ENCODE measurements at regions of chr14 and their contacts with region 1.

Region 1: GRCh38 chr14:74571901-74572725 is 39.9 kb downstream of the LTBP2 start:
- DNase-seq: no peak
- ATAC-seq: no peak
- H3K4me3 Mint-ChIP-seq: no peak overlapping the region
- H3K27ac Mint-ChIP-seq: 0 out of 2 replicates have a peak overlapping the region, but pooled peaks have one; percentile 53
- H3K4me1 Mint-ChIP-seq: peaks cover 31% of the 10 kb centered on the region
- H3K27me3 Mint-ChIP-seq: no peaks in the 10 kb centered on the region
- CTCF ChIP-seq: no peak

Region 2: GRCh38 chr14:74478996-74479635 is 93.0 kb before region 1 on chr14:
- CTCF ChIA-PET with region 1: no interaction called
- POLR2A ChIA-PET with region 1: no interaction called
- DNase-seq: no peak
- ATAC-seq: peak; percentile 77
- H3K4me3 Mint-ChIP-seq: no peak overlapping the region
- H3K27ac Mint-ChIP-seq: no peak overlapping the region
- H3K4me1 Mint-ChIP-seq: peaks cover 5% of the 10 kb centered on the region
- H3K27me3 Mint-ChIP-seq: no peaks in the 10 kb centered on the region
- CTCF ChIP-seq: peak; percentile 78

Region 3: DNA sequence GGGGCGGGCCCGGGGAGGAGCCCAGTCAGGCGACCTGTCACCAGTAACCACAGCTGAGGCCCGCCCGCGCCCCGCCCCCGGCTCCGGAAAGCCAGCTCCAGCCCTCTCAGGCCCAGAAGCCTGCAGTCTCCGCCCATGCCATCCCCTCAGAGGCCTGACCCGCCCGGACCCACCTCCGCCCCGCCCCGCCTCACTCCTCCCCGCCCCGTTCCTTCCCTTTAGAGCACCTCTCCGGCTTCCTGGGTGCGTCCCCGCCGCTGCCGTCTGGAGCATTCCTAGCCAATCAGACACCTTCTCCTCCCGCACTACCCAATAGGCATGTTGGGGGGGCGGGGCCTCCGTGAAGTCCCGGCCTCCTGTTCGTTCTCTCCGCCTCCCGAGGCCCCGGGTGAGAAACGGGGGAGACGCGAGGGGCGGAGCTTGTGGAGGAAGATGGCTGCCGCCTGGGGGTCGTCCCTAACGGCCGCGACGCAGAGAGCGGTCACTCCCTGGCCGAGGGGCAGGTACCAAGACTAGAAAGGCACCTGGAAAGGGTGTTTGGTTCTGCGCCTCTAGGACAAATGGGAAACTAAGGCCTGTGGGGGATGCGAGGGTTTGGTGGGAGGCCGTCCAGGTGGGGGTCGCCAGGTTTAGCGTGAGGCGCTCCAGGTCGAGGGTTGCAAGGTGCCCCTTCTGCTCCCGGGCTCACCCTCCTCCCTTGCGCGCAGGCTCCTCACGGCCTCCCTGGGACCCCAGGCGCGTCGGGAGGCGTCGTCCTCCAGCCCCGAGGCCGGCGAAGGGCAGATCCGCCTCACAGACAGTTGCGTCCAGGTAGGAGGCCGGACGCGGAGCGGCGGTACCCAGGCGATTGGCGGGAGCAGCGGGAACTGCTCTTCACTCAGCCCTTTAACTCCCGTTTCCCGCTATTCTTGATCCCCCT is 78.5 kb before region 1 on chr14 and contains the start of gene ISCA2:
- CTCF ChIA-PET with region 1: interaction called, 18 read pairs
- POLR2A ChIA-PET with region 1: no interaction called
- DNase-seq: peak; percentile 100
- ATAC-seq: peak; percentile 92
- H3K4me3 Mint-ChIP-seq: peak within 1 kb of the TSS; percentile 96
- H3K27ac Mint-ChIP-seq: peak within 1 kb of the TSS; percentile 86
- H3K4me1 Mint-ChIP-seq: peaks cover 22% of the 10 kb centered on the region
- H3K27me3 Mint-ChIP-seq: no peaks in the 10 kb centered on the region
- CTCF ChIP-seq: no peak
- total RNA-seq, gene ISCA2: 49.1 to 50.6 TPM (median 50.1 TPM) in 3 replicates

Region 4: DNA sequence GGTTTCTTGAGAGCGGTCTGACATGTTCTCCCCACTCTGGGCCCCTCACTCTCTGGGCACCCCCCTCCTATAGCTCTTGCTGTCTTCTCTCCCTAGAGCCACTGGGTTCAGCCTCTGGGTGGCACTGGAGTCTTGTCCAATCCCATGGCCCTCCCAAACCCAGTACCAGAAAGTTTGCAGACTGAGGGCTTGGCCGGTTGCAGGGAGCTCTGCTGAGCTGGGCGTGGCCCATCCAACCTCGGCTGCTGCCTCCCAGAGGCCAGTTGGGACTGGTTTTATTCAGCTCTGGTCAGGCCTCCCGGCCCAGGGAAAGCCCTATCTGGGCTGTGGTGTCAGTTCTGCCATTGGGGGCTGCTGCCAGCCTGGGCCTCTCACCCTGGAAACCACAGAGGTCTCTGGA is 40.6 kb before region 1 on chr14:
- CTCF ChIA-PET with region 1: interaction called, 42 read pairs
- POLR2A ChIA-PET with region 1: no interaction called
- DNase-seq: peak; percentile 77
- ATAC-seq: peak; percentile 92
- H3K4me3 Mint-ChIP-seq: no peak overlapping the region
- H3K27ac Mint-ChIP-seq: 0 out of 2 replicates have a peak overlapping the region, but pooled peaks have one; percentile 63
- H3K4me1 Mint-ChIP-seq: peaks cover 7% of the 10 kb centered on the region
- H3K27me3 Mint-ChIP-seq: no peaks in the 10 kb centered on the region
- CTCF ChIP-seq: no peak

Region 5: GRCh38 chr14:74558655-74559054 is 13.5 kb before region 1 on chr14:
- CTCF ChIA-PET with region 1: interaction called, 39 read pairs
- POLR2A ChIA-PET with region 1: no interaction called
- DNase-seq: no peak
- ATAC-seq: no peak
- H3K4me3 Mint-ChIP-seq: no peak overlapping the region
- H3K27ac Mint-ChIP-seq: no peak overlapping the region
- H3K4me1 Mint-ChIP-seq: peaks cover 12% of the 10 kb centered on the region
- H3K27me3 Mint-ChIP-seq: no peaks in the 10 kb centered on the region
- CTCF ChIP-seq: no peak

Region 6: DNA sequence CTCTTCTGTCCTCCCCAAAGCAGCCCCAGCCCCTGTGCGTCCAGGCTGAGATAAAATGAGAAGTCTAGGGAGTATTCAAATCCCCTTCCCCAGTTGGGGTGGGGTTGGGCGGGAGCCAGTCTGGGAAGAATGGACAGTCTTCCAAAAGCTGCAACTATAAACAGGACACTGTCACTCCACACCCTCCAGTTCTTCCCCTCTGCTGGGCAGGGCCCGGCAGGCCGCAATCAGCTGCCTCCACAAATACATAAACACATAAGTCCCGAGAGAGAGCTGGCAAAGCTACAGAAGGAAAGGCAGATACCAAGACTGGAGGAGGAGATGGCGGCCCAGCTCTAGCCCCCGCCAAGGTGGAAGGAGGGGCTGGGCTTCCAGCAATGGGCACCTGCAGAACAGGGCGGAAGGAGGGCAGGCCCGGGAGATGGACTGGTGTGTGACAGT is 27.2 kb after region 1 on chr14:
- CTCF ChIA-PET with region 1: interaction called, 16 read pairs
- POLR2A ChIA-PET with region 1: no interaction called
- DNase-seq: no peak
- ATAC-seq: no peak
- H3K4me3 Mint-ChIP-seq: no peak overlapping the region
- H3K27ac Mint-ChIP-seq: no peak overlapping the region
- H3K4me1 Mint-ChIP-seq: no peaks in the 10 kb centered on the region
- H3K27me3 Mint-ChIP-seq: no peaks in the 10 kb centered on the region
- CTCF ChIP-seq: no peak

Region 7: DNA sequence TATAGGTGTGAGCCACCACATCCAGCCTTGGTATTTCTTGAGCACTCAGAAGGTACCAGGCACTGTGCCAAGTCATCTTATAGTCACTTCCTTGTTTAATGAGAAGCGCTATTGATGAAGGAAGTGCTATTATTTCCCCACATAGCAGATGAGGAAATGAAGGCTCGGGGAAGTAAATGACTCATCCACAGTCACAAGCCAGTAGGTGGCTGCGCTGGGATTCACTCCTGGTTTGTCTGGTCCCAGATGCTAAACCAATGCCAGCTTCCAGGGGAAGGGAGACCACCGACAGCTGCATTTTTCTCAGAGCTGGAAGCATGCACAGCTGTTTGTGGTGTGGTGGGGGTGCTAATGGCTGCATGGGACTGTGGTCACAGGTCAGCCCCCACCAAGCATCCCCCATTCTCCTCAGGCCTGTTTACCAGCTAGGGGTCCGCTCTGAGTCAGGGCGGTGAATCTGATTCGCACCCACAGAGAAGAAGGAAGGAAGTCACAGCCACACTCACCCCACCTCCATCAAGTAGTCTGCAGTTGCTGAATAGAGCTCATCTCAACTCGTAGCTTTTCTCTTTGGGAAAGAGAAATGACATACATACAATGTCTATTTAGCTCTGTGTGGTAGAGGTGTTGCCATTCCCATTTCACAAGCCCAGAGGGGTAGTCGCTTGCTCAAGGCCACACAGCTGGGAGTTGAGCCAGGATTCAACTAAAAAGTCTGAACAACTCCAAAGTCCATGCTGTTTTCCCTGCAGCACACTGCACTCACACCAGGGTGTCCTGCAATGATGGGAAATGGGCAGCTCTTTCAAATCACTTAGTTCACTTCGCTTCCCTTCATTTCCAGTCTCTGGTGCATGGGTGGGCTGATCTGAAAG is 46.2 kb after region 1 on chr14:
- CTCF ChIA-PET with region 1: interaction called, 110 read pairs
- POLR2A ChIA-PET with region 1: no interaction called
- DNase-seq: no peak
- ATAC-seq: no peak; the same call in 1 of the 2 replicates
- H3K4me3 Mint-ChIP-seq: no peak overlapping the region
- H3K27ac Mint-ChIP-seq: no peak overlapping the region
- H3K4me1 Mint-ChIP-seq: peaks cover 35% of the 10 kb centered on the region
- H3K27me3 Mint-ChIP-seq: peaks cover 26% of the 10 kb centered on the region
- CTCF ChIP-seq: no peak

Region 8: DNA sequence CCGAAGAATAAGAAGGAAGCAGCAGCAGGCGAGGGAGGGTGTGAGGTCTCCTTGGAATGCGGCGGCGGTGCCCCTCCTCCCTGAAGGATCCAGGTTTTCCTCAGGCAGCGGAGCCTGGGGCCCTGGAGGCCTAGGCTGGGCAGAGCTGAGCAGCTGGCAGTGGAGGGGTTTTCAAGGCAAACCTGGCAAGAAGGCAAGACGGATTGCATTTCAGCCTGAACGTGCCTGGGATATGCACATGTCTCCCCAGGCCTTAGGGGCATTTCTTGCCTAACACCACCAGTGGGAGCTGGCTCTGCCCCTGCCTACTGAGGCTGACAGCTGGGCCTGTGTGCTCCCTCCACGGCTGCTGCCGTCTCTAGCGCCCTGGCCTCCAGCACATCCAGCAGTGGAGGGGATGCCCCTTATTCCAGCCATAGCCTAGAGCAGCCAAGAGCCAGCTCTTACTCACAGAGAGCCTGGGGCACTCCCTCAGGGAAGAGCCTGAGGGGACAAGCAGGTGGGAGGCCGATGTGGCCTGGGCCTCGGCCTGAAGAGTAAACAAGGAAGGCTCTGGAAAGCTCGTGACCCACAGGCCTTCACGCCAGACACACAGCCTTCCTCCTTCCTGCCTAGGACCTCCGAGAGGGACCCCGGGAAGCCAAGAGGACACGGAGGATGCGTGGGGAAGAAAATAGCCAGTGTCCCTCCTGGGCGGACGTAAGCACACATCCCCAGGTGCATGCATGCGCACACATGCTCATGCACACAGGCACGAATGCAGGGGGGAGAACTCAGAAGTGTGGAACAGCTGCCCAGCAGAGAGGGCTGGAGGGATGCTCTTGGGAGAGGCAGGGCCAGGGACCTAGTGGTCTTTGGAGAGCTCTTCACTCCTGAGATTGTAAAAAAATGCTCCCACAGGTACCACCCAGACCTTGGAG is 407.6 kb after region 1 on chr14:
- CTCF ChIA-PET with region 1: no interaction called
- POLR2A ChIA-PET with region 1: no interaction called
- DNase-seq: peak; percentile 54
- ATAC-seq: peak; percentile 67
- H3K4me3 Mint-ChIP-seq: no peak overlapping the region
- H3K27ac Mint-ChIP-seq: no peak overlapping the region
- H3K4me1 Mint-ChIP-seq: peaks cover 33% of the 10 kb centered on the region
- H3K27me3 Mint-ChIP-seq: no peaks in the 10 kb centered on the region; the same call in 1 of the 2 replicates
- CTCF ChIP-seq: no peak